Dorsolateral prefrontal cortex (tissue), 120 donors: ENCODE measurements at regions of chr11 and their contacts with region 1.

Region 1: GRCh38 chr11:84524422-84525051 is 1102.6 kb downstream of the DLG2 start:
- DNase-seq: no peak
- H3K4me3 ChIP-seq: peak overlapping the region in 2 of 59 donors; percentile 5 to 11
- H3K27ac ChIP-seq: peak overlapping the region in 30 of 59 donors; percentile 4 to 82 (median 42)
- H3K27me3 ChIP-seq: no peaks in the 10 kb centered on the region
- CTCF ChIP-seq: peak; percentile 53 to 89 (median 74)

Region 2: DNA sequence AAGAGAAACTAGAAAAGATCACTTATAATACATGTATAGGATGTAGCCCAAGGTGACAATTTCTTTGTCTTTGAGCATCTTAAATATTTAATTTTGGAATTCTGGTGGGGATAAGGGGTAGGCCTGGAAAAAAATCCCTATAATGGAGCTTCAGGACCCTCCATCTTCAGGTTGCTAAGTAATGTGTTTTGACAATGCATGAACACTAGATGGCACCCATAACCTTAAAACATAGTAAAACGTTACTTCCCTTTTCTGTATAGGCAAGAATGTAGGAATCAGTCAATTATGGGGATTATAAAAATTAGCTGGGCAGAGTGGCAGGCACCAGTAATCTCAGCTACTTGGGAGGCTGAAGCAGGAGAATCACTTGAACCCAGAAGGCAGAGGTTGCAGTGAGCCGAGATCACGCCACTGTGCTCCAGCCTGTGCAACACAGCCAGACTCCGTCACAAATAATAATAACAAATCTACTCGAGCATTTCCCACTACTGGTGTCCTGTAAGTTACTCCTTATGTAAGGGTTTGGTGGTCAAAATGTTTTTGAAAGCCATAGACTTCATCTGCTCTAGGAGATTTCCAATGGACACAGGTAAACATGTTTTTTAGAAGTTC is 696.5 kb before region 1 on chr11:
- intact Hi-C with region 1: loop called in 1 of 2 experiments (anchors 5 kb)
- DNase-seq: no peak
- H3K4me3 ChIP-seq: peak overlapping the region in 45 of 59 donors; percentile 10 to 57 (median 34)
- H3K27ac ChIP-seq: peak overlapping the region in 56 of 59 donors; percentile 8 to 85 (median 67)
- H3K27me3 ChIP-seq: no peaks in the 10 kb centered on the region
- CTCF ChIP-seq: peak; percentile 38 to 83 (median 70)

Region 3: GRCh38 chr11:84384731-84385130 is 139.8 kb before region 1 on chr11:
- intact Hi-C with region 1: loop called in 1 of 2 experiments (anchors 5 kb)
- DNase-seq: peak in 7 of 10 donors; percentile 38 to 81 (median 55)
- H3K4me3 ChIP-seq: no peak overlapping the region
- H3K27ac ChIP-seq: peak overlapping the region in 37 of 59 donors; percentile 1 to 74 (median 42)
- H3K27me3 ChIP-seq: no peaks in the 10 kb centered on the region
- CTCF ChIP-seq: peak; percentile 30 to 96 (median 87)

Region 4: DNA sequence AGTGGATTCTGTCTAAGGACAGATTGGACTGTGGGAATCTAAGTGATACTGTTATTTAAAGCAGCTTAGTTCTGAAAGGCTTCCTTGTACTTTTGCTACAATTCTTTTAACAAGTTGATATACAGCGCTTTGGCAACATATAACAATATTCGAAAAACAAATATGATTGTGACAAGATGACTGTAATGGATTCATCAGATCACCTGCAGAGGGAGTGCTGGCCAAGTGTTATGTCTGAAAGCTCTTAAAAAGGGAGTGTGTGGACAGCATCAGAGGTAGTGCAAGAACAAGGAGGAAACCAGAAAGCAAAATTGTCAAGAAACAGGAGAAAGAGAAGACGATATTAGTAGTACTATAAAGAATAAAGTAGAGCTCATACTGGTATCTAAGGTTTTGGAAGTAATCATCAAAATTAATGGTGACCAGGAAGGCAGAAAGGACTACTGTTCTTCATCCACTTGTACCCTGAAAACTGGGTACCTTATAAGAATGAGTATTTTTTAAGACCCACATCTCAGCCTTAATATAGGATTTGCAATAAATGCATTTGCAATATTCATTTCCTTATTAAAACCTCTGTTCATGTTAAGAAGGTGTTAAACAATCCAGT is 126.4 kb before region 1 on chr11:
- intact Hi-C with region 1: loop called in 1 of 2 experiments (anchors 10 kb)
- DNase-seq: no peak
- H3K4me3 ChIP-seq: no peak overlapping the region
- H3K27ac ChIP-seq: no peak overlapping the region
- H3K27me3 ChIP-seq: no peaks in the 10 kb centered on the region
- CTCF ChIP-seq: peak in 51 of 56 donors; percentile 11 to 62 (median 41)